ENCODE measurements at regions of chr7 and their contacts with region 1.

Region 1: GRCh38 chr7:7920481-7920880 is 48.1 kb upstream of the GLCCI1 start:
- DNase-seq: no peak
- ATAC-seq: peak; percentile 92
- H3K4me3 Mint-ChIP-seq: peak overlapping the region; percentile 69
- H3K27ac Mint-ChIP-seq: peak overlapping the region; percentile 91
- H3K4me1 Mint-ChIP-seq: peaks cover 62% of the 10 kb centered on the region
- H3K27me3 Mint-ChIP-seq: no peaks in the 10 kb centered on the region
- CTCF ChIP-seq: no peak

Region 2: GRCh38 chr7:7707806-7708205 is 212.7 kb before region 1 on chr7:
- CTCF ChIA-PET with region 1: no interaction called
- POLR2A ChIA-PET with region 1: no interaction called
- intact Hi-C with region 1: loop called (anchors 2 kb)
- DNase-seq: no peak
- ATAC-seq: no peak
- H3K4me3 Mint-ChIP-seq: no peak overlapping the region
- H3K27ac Mint-ChIP-seq: no peak overlapping the region
- H3K4me1 Mint-ChIP-seq: peaks cover 32% of the 10 kb centered on the region
- H3K27me3 Mint-ChIP-seq: no peaks in the 10 kb centered on the region
- CTCF ChIP-seq: no peak

Region 3: DNA sequence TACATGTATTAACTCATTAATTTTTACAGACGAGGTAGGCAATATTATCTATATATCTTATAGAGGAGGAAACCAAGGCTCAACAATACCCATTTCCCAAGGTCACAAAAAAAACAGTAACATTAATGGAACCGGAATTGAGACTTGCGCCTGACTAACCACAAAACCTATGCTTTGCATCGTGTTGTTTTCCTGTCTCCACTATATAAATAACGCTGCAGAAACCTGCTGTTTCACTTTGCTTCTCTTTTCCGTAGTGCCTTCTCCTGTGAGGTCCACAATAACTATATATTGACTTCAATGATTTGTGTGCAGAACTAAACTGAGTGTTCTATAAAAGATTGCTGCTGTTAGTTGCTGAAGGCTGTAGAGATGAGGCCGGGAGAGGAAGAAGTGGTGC is 104.4 kb before region 1 on chr7:
- CTCF ChIA-PET with region 1: no interaction called
- POLR2A ChIA-PET with region 1: interaction called, 6 read pairs
- intact Hi-C with region 1: loop called (anchors 1 kb)
- DNase-seq: no peak
- ATAC-seq: peak; percentile 56
- H3K4me3 Mint-ChIP-seq: peak overlapping the region; percentile 67
- H3K27ac Mint-ChIP-seq: peak overlapping the region; percentile 82
- H3K4me1 Mint-ChIP-seq: peaks cover 71% of the 10 kb centered on the region
- H3K27me3 Mint-ChIP-seq: no peaks in the 10 kb centered on the region
- CTCF ChIP-seq: no peak

Region 4: GRCh38 chr7:7933915-7934526 is 13.5 kb after region 1 on chr7:
- CTCF ChIA-PET with region 1: no interaction called
- POLR2A ChIA-PET with region 1: interaction called, 10 read pairs
- intact Hi-C with region 1: no loop called
- DNase-seq: no peak
- ATAC-seq: no peak
- H3K4me3 Mint-ChIP-seq: no peak overlapping the region
- H3K27ac Mint-ChIP-seq: no peak overlapping the region
- H3K4me1 Mint-ChIP-seq: no peaks in the 10 kb centered on the region
- H3K27me3 Mint-ChIP-seq: no peaks in the 10 kb centered on the region
- CTCF ChIP-seq: no peak

Region 5: GRCh38 chr7:7944619-7945282 is 24.3 kb after region 1 on chr7:
- CTCF ChIA-PET with region 1: interaction called, 6 read pairs
- POLR2A ChIA-PET with region 1: interaction called, 19 read pairs
- intact Hi-C with region 1: loop called (anchors 1 kb)
- DNase-seq: peak; percentile 48
- ATAC-seq: peak; percentile 92
- H3K4me3 Mint-ChIP-seq: peak overlapping the region; percentile 69
- H3K27ac Mint-ChIP-seq: peak overlapping the region; percentile 79
- H3K4me1 Mint-ChIP-seq: peaks cover 28% of the 10 kb centered on the region
- H3K27me3 Mint-ChIP-seq: no peaks in the 10 kb centered on the region
- CTCF ChIP-seq: no peak